ENCODE measurements at regions of chr10 and their contacts with region 1.

Region 1: GRCh38 chr10:7846591-7846990 is 28.3 kb downstream of the TAF3 start:
- DNase-seq: no peak
- H3K4me3 ChIP-seq: no peak overlapping the region
- H3K27ac ChIP-seq: no peak overlapping the region
- H3K4me1 ChIP-seq: no peaks in the 10 kb centered on the region
- H3K27me3 ChIP-seq: no peaks in the 10 kb centered on the region
- CTCF ChIP-seq: no peak
- POLR2A ChIP-seq: no peak

Region 2: GRCh38 chr10:7797582-7797981 is 49.0 kb before region 1 on chr10:
- intact Hi-C with region 1: no loop called
- DNase-seq: no peak
- H3K4me3 ChIP-seq: no peak overlapping the region
- H3K27ac ChIP-seq: no peak overlapping the region
- H3K4me1 ChIP-seq: no peaks in the 10 kb centered on the region
- H3K27me3 ChIP-seq: no peaks in the 10 kb centered on the region
- CTCF ChIP-seq: no peak
- POLR2A ChIP-seq: no peak

Region 3: GRCh38 chr10:8360365-8360764 is 513.8 kb after region 1 on chr10:
- intact Hi-C with region 1: no loop called
- DNase-seq: no peak
- H3K4me3 ChIP-seq: no peak overlapping the region
- H3K27ac ChIP-seq: no peak overlapping the region
- H3K4me1 ChIP-seq: no peaks in the 10 kb centered on the region
- H3K27me3 ChIP-seq: no peaks in the 10 kb centered on the region
- CTCF ChIP-seq: no peak
- POLR2A ChIP-seq: no peak

Region 4: GRCh38 chr10:8721650-8722049 is 875.1 kb after region 1 on chr10:
- intact Hi-C with region 1: loop called (anchors 5 kb)
- DNase-seq: no peak
- H3K4me3 ChIP-seq: no peak overlapping the region
- H3K27ac ChIP-seq: peak overlapping the region in 1 of 2 donors; percentile 25
- H3K4me1 ChIP-seq: no peaks in the 10 kb centered on the region
- H3K27me3 ChIP-seq: no peaks in the 10 kb centered on the region
- CTCF ChIP-seq: no peak
- POLR2A ChIP-seq: no peak